Panc1 (cell line): ENCODE measurements at regions of chr3 and their contacts with region 1.

Region 1: GRCh38 chr3:8963137-8963869 is at the start of gene RAD18:
- DNase-seq: peak; percentile 52
- ATAC-seq: peak; percentile 95
- H3K4me3 ChIP-seq: peak within 1 kb of the TSS; percentile 74 to 95
- H3K27ac ChIP-seq: peak within 1 kb of the TSS; percentile 90
- H3K4me1 ChIP-seq: peaks cover 21% of the 10 kb centered on the region
- H3K27me3 ChIP-seq: no peaks in the 10 kb centered on the region
- CTCF ChIP-seq: no peak
- total RNA-seq, gene RAD18: 13.8 TPM

Region 2: DNA sequence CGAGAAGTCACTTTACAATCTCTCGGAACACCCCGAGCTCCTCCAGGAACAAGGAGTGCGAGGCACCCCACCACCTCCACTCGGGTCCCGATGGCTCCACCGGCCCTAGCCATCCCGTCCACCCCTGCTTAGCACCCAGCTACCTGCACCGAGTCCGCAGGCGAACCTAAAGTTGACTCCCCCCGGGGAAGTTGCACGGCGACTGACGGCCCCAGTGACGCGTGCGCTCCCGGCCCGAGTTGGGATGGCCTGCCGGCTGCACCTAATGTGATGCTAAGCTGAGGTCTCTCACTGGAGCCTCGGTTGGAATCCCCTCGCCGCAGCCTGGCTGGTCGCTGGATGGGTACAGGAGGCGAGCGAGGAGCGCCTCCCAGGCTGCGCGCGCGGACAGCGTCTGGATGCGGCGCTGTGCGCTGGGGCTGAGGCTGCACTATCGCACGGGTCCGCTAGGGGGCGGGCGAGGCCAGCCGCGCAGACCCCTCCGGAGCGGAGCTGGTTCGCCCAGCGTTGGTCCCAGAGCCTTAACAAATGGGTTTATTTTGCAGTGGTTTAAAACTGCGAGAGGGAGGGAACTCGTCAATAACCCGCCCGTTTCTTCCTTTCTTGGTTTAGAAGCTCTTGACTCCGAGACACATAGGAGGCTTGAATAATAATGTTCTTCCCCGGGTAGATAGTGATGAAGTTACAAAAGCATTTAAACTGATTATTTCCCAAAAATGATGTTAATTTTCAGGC is 194.0 kb before region 1 on chr3 and contains the start of gene OXTR:
- CTCF ChIA-PET with region 1: no interaction called
- POLR2A ChIA-PET with region 1: no interaction called
- in situ Hi-C with region 1: no loop called
- intact Hi-C with region 1: loop called (anchors 2 kb)
- DNase-seq: peak; percentile 38
- ATAC-seq: peak; percentile 99
- H3K4me3 ChIP-seq: peak within 1 kb of the TSS; percentile 55 to 70
- H3K27ac ChIP-seq: peak within 1 kb of the TSS; percentile 34; the same call in 1 of the 2 replicates
- H3K4me1 ChIP-seq: no peaks in the 10 kb centered on the region; the same call in 1 of the 2 replicates
- H3K27me3 ChIP-seq: no peaks in the 10 kb centered on the region
- CTCF ChIP-seq: peak; percentile 98
- total RNA-seq, gene OXTR: 2.7 TPM

Region 3: GRCh38 chr3:9826815-9827567 is 863.7 kb after region 1 on chr3:
- CTCF ChIA-PET with region 1: no interaction called
- POLR2A ChIA-PET with region 1: no interaction called
- in situ Hi-C with region 1: no loop called
- intact Hi-C with region 1: no loop called
- DNase-seq: no peak
- ATAC-seq: peak; percentile 82
- H3K4me3 ChIP-seq: no peak overlapping the region
- H3K27ac ChIP-seq: no peak overlapping the region
- H3K4me1 ChIP-seq: no peaks in the 10 kb centered on the region
- H3K27me3 ChIP-seq: no peaks in the 10 kb centered on the region
- CTCF ChIP-seq: no peak; the same call in 1 of the 2 replicates